Panc1 (cell line): ENCODE measurements at regions of chr17 and their contacts with region 1.

Region 1: DNA sequence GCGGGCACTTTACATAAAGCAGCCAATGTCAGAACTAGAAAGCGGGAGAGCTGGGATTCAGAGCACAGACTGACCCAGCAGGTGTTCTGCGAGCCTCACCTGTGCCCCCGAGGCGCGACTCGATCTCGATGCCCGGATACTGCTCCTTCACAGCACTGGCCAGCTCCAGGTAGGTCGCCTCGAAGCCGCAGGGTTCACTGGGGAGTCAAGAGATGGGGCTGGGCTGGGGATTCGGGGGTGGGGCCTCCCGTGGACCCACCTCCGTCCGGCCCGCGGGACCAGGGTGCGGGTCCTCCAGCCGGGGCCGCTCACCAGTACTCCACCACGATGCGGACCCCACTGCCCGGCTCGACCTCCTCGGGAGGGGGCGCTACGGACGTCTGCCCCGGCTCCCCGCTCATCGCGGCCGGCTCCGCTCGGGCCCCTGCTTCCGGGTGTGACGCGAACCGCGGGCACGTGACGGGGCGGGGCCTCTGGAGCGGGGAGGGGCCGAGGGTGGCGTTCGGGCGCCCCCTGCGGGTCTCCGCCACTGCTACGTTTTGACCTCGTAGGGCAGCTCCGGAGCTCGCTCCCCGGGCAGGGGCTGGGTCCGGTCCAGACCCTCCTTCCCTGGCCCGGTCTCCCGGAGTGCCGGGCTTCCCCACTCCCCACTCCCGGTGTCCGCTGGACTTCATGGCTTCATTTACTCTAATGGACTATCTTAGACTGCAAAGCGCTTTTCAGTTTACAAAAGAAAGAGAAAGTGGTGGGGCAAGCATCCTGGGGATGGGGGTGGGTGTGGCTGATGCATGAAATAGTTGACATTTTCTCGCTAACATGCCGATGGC is at the start of gene MIEN1:
- DNase-seq: no peak
- ATAC-seq: peak; percentile 96
- H3K4me3 ChIP-seq: peak within 1 kb of the TSS; percentile 73 to 96
- H3K27ac ChIP-seq: peak within 1 kb of the TSS; percentile 93
- H3K4me1 ChIP-seq: 0 out of 2 replicates have a peak, but pooled peaks cover 5% of the 10 kb centered on the region
- H3K27me3 ChIP-seq: no peaks in the 10 kb centered on the region
- CTCF ChIP-seq: peak; percentile 96
- total RNA-seq, gene MIEN1: 103 TPM

Region 2: GRCh38 chr17:39663688-39664616 is 66.4 kb before region 1 on chr17:
- CTCF ChIA-PET with region 1: no interaction called
- POLR2A ChIA-PET with region 1: no interaction called
- in situ Hi-C with region 1: no loop called
- intact Hi-C with region 1: no loop called
- DNase-seq: no peak
- ATAC-seq: peak; percentile 72
- H3K4me3 ChIP-seq: peak overlapping the region; percentile 7 to 36; a peak in 2 of 4 replicates
- H3K27ac ChIP-seq: 0 out of 2 replicates have a peak overlapping the region, but pooled peaks have one; percentile 57
- H3K4me1 ChIP-seq: peaks cover 46% of the 10 kb centered on the region
- H3K27me3 ChIP-seq: no peaks in the 10 kb centered on the region
- CTCF ChIP-seq: no peak

Region 3: DNA sequence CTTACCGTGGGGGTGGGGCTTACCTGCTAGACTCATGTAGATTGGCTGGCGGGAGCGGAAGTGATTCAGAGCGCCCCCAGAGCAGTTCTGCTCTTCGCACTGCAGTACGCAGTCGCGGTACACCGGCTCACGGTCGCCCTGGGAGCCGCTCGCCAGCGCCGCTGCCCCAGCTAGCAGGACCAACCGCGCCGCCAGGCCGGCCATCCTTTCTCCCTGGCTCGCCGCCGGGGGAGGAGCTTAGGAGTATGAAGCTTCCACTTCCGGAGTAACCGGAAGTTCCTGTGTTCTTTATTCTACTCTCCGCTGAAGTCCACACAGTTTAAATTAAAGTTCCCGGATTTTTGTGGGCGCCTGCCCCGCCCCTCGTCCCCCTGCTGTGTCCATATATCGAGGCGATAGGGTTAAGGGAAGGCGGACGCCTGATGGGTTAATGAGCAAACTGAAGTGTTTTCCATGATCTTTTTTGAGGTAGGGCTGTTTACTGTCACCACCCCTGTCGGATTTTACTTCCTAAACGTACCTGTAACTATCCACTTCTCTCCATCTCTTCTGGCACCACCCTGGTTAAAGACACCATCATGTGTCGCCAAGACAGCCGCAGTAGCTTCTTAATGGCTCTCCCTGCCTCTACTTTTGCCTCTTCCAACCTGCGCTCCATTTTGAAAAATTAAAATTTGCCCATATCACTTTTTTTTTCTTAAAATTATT is 42.3 kb before region 1 on chr17 and contains the start of gene PGAP3:
- CTCF ChIA-PET with region 1: interaction called, 10 read pairs
- POLR2A ChIA-PET with region 1: no interaction called
- in situ Hi-C with region 1: no loop called
- intact Hi-C with region 1: no loop called
- DNase-seq: peak; percentile 50
- ATAC-seq: peak; percentile 98
- H3K4me3 ChIP-seq: peak within 1 kb of the TSS; percentile 56 to 78
- H3K27ac ChIP-seq: peak within 1 kb of the TSS; percentile 83
- H3K4me1 ChIP-seq: 0 out of 2 replicates have a peak, but pooled peaks cover 3% of the 10 kb centered on the region
- H3K27me3 ChIP-seq: no peaks in the 10 kb centered on the region
- CTCF ChIP-seq: no peak
- total RNA-seq, gene PGAP3: 21.8 TPM

Region 4: DNA sequence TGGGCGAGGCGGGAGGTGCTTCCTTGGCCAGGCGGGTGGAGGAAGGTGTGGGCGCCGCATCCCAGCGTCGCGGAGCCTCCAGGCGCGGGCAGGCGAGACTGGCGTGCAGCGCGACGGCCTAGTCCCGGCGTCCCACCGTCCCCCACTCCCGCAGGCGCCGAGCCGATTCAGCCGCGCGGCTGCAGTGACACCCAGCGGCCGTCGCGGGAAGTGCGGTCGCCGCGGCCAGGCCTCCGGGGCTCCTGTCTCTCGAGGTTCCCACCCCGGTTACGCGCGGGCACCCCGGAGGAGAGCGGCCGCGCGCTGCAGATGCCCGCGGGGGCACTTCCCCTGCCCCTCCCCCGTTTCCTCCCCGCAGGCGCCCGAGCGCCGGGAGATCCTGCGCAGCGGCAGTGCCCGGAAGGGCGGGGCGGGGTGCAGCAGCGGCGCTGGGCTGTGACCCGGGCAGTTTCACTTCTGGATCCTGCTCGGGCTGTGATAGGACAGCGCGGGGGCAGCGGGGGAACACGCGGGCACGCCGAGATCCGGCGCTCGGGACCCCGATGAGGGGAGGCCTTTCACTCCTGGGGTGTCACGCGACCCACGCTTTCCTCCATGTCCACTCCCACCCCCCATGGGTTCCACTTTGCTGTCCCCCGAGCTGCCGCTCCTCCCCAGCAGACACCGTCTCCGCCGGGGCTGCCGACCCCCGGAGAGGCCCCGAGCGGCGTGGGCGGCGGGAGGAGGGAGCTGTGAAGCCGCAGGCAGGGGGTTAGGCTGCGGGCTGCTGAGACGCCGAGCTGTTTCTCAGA is 24.0 kb after region 1 on chr17:
- CTCF ChIA-PET with region 1: interaction called, 11 read pairs
- POLR2A ChIA-PET with region 1: interaction called, 4 read pairs
- in situ Hi-C with region 1: no loop called
- intact Hi-C with region 1: no loop called
- DNase-seq: peak; percentile 35
- ATAC-seq: peak; percentile 95
- H3K4me3 ChIP-seq: peak overlapping the region; percentile 58 to 68
- H3K27ac ChIP-seq: peak overlapping the region; percentile 80
- H3K4me1 ChIP-seq: peaks cover 9% of the 10 kb centered on the region; the same call in 1 of the 2 replicates
- H3K27me3 ChIP-seq: no peaks in the 10 kb centered on the region; the same call in 1 of the 2 replicates
- CTCF ChIP-seq: peak; percentile 97

Region 5: GRCh38 chr17:39763046-39763820 is 32.9 kb after region 1 on chr17:
- CTCF ChIA-PET with region 1: no interaction called
- POLR2A ChIA-PET with region 1: interaction called, 19 read pairs
- in situ Hi-C with region 1: no loop called
- intact Hi-C with region 1: no loop called
- DNase-seq: no peak
- ATAC-seq: no peak
- H3K4me3 ChIP-seq: no peak overlapping the region
- H3K27ac ChIP-seq: no peak overlapping the region
- H3K4me1 ChIP-seq: no peaks in the 10 kb centered on the region
- H3K27me3 ChIP-seq: no peaks in the 10 kb centered on the region; the same call in 1 of the 2 replicates
- CTCF ChIP-seq: no peak